ENCODE measurements at regions of chr11 and their contacts with region 1.

Region 1: DNA sequence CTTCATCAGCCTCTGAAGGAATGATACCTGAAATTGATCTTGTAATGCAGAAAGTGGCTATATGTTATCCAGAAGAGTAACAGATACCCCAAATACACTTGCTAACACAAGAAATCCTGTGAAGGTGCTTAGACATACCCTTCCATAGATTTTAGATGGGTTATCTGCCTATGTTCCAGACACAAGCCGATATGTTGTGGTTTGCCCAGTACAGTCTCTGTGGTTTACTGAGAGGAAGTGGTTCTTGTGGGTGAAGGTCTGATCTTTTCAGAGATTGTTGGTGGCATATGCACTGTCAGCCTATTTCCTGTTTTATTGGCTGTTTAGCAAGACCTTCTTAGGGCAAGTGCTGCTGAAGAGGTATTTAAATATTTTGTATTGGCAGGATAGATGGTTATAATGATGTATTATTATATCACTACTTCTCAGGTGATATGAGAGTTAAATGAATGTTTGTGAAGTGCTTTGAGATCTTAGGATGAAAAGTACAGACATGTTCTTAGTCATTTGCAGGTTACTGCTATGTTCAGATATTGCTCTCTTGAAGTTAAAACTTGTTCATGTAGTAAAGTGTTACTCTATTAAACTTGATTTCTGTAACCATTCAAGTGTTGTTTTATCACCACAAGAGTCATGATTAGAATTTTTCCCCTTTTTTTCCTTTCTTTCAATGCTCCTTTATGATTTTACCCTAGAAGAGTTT is 8.2 kb downstream of the ARHGEF12 start:
- DNase-seq: no peak
- ATAC-seq: no peak
- H3K4me3 ChIP-seq: no peak overlapping the region
- H3K27ac ChIP-seq: no peak overlapping the region
- H3K4me1 ChIP-seq: peaks cover 3 to 12% of the 10 kb centered on the region in 2 donors
- H3K27me3 ChIP-seq: no peaks in the 10 kb centered on the region

Region 2: GRCh38 chr11:120384476-120384875 is 40.0 kb after region 1 on chr11:
- intact Hi-C with region 1: loop called in 1 of 2 experiments (anchors 5 kb)
- DNase-seq: no peak
- ATAC-seq: no peak
- H3K4me3 ChIP-seq: no peak overlapping the region
- H3K27ac ChIP-seq: no peak overlapping the region
- H3K4me1 ChIP-seq: peaks cover 4 to 17% of the 10 kb centered on the region in 2 donors
- H3K27me3 ChIP-seq: no peaks in the 10 kb centered on the region

Measured in aorta (tissue), 5 donors.